Activated CD8-positive, alpha-beta T cell treated with anti-CD3 and anti-CD28 coated beads for 36 hours (primary cell): ENCODE measurements at regions of chr9 and their contacts with region 1.

Region 1: DNA sequence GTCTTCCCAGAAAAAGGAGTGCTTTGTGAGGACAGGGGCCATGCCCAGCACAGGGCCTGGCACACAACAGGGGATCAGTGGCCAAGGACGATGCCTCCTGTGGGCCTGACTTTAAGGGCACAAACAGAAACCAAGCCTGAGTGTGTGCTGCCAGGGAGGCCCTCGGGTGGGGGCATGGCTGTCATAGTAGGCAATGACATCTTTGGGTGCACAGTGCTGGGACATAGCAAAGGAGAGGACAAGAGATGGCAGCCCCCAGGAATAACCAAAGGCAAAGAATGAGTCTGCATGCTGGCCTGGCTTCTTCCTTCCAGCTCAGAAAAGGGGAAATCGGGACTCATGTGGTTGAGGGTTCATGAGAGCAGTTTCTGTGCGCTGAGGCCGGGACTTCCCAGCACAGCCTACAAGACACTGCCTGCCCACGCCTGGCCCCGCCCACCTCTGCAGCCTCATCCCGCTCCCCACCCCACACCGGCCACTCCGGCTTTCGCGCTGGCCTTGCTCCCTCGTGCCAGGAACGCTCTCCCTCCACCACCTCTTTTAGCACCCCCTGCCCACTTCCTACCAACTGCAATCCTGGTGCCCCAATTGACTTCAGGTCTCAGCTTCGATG is 13.8 kb upstream of the LHX2 start:
- DNase-seq: peak; percentile 62
- ATAC-seq: peak; percentile 63
- H3K4me3 Mint-ChIP-seq: peak overlapping the region; percentile 25
- H3K27ac Mint-ChIP-seq: no peak overlapping the region
- H3K4me1 Mint-ChIP-seq: peaks cover 37% of the 10 kb centered on the region
- H3K27me3 Mint-ChIP-seq: peaks cover 72% of the 10 kb centered on the region
- CTCF ChIP-seq: no peak

Region 2: GRCh38 chr9:123975871-123976270 is 21.9 kb before region 1 on chr9:
- CTCF ChIA-PET with region 1: interaction called, 4 read pairs
- POLR2A ChIA-PET with region 1: no interaction called
- intact Hi-C with region 1: loop called (anchors 2 kb)
- DNase-seq: no peak
- ATAC-seq: no peak
- H3K4me3 Mint-ChIP-seq: no peak overlapping the region
- H3K27ac Mint-ChIP-seq: no peak overlapping the region
- H3K4me1 Mint-ChIP-seq: no peaks in the 10 kb centered on the region
- H3K27me3 Mint-ChIP-seq: peaks cover 18% of the 10 kb centered on the region
- CTCF ChIP-seq: no peak

Region 3: GRCh38 chr9:124022201-124023121 is 24.7 kb after region 1 on chr9:
- CTCF ChIA-PET with region 1: no interaction called
- POLR2A ChIA-PET with region 1: no interaction called
- intact Hi-C with region 1: no loop called
- DNase-seq: no peak
- ATAC-seq: no peak
- H3K4me3 Mint-ChIP-seq: no peak overlapping the region
- H3K27ac Mint-ChIP-seq: no peak overlapping the region
- H3K4me1 Mint-ChIP-seq: peaks cover 18% of the 10 kb centered on the region
- H3K27me3 Mint-ChIP-seq: peaks cover 72% of the 10 kb centered on the region
- CTCF ChIP-seq: no peak

Region 4: GRCh38 chr9:124133727-124134126 is 136.0 kb after region 1 on chr9:
- CTCF ChIA-PET with region 1: no interaction called
- POLR2A ChIA-PET with region 1: no interaction called
- intact Hi-C with region 1: no loop called
- DNase-seq: peak; percentile 31
- ATAC-seq: peak; percentile 37
- H3K4me3 Mint-ChIP-seq: no peak overlapping the region
- H3K27ac Mint-ChIP-seq: no peak overlapping the region
- H3K4me1 Mint-ChIP-seq: no peaks in the 10 kb centered on the region
- H3K27me3 Mint-ChIP-seq: peaks cover 11% of the 10 kb centered on the region
- CTCF ChIP-seq: no peak